ENCODE measurements at regions of chr19 and their contacts with region 1.

Region 1: GRCh38 chr19:49690656-49691242 is at the start of gene CPT1C:
- DNase-seq: peak; percentile 74 to 96 (median 92)
- H3K4me3 ChIP-seq: peak within 1 kb of the TSS; percentile 54 to 91 (median 71)
- H3K27ac ChIP-seq: peak within 1 kb of the TSS; percentile 7 to 95 (median 90)
- H3K27me3 ChIP-seq: no peaks in the 10 kb centered on the region
- CTCF ChIP-seq: peak in 2 of 56 donors; percentile 14 to 15
- total RNA-seq, gene CPT1C: 55.9 to 163 (median 105) TPM

Region 2: GRCh38 chr19:49801966-49802690 is 111.4 kb after region 1 on chr19:
- intact Hi-C with region 1: loop called in 1 of 2 experiments (anchors 5 kb)
- DNase-seq: peak; percentile 93 to 99 (median 96)
- H3K4me3 ChIP-seq: peak overlapping the region; percentile 24 to 69 (median 51)
- H3K27ac ChIP-seq: peak overlapping the region in 56 of 59 donors; percentile 21 to 87 (median 74)
- H3K27me3 ChIP-seq: no peaks in the 10 kb centered on the region
- CTCF ChIP-seq: peak in 53 of 56 donors; percentile 29 to 71 (median 53)

Region 3: GRCh38 chr19:49817964-49818648 is 127.4 kb after region 1 on chr19 and contains the start of gene MED25:
- intact Hi-C with region 1: loop called in 1 of 2 experiments (anchors 5 kb)
- DNase-seq: peak; percentile 67 to 92 (median 78)
- H3K4me3 ChIP-seq: peak within 1 kb of the TSS; percentile 58 to 98 (median 88)
- H3K27ac ChIP-seq: peak within 1 kb of the TSS; percentile 89 to 100 (median 98)
- H3K27me3 ChIP-seq: no peaks in the 10 kb centered on the region
- CTCF ChIP-seq: peak in 49 of 56 donors; percentile 17 to 64 (median 46)
- total RNA-seq, gene MED25: 42.6 to 78.6 (median 57.7) TPM

Region 4: DNA sequence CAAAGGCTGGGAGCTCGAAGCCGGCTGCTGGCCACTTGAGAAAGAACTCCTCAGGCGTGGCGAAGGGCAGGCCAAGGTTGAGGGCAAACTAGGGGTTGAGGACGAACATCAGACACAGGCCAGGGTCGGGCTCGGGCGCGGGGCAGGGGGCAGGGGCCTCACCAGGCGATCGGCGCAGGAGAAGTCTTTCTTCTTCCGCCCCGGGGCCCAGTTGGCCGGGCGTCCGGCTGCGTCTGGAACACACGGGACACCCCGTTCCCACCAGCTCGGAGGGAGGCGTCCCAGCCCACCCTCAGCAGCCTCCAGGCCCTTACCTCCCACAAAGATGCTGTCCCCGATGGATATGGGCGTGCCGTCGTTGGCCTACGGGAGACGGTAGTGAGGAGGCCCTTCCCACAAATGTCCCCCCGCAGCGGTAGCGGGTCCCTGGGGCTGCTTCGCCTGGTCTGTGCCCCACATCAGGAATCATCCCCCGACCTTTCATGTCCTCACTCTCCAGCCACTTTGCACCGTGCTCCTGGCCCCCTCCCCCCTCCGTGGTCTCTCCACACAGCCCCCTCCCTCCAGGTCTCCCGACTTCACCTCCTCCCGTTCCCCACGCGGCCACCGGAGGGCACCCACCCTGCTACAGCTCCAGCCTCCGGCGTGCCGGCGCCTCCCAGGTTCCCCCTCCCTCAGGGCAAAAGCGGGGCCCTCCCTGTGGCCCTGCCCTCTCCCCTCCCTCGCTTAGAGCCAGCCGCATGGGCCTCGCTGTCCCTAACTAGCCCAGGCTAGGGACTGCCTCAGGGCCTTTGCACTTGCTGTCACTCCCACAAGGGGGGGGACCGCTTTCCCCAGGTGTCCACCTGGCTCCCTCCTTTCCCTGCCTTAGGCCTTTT is 171.9 kb after region 1 on chr19:
- intact Hi-C with region 1: loop called in 1 of 2 experiments (anchors 5 kb)
- DNase-seq: peak in 2 of 10 donors; percentile 40 to 45
- H3K4me3 ChIP-seq: no peak overlapping the region
- H3K27ac ChIP-seq: peak overlapping the region in 2 of 59 donors; percentile 5 to 35
- H3K27me3 ChIP-seq: no peaks in the 10 kb centered on the region
- CTCF ChIP-seq: no peak

Measured in dorsolateral prefrontal cortex (tissue), 120 donors.